Mammary epithelial cell (primary cell): ENCODE measurements at regions of chr18 and their contacts with region 1.

Region 1: GRCh38 chr18:21997207-21998143 is 171.9 kb upstream of the GATA6 start:
- DNase-seq: peak; percentile 32
- H3K4me3 ChIP-seq: no peak overlapping the region
- H3K27ac ChIP-seq: no peak overlapping the region
- H3K4me1 ChIP-seq: no peaks in the 10 kb centered on the region
- H3K27me3 ChIP-seq: no peaks in the 10 kb centered on the region
- CTCF ChIP-seq: peak; percentile 82 to 96

Region 2: GRCh38 chr18:21980744-21981143 is 16.7 kb before region 1 on chr18:
- CTCF ChIA-PET with region 1: interaction called, 10 read pairs
- dilution Hi-C with region 1: no loop called
- in situ Hi-C with region 1: no loop called
- intact Hi-C with region 1: no loop called
- DNase-seq: no peak
- H3K4me3 ChIP-seq: no peak overlapping the region
- H3K27ac ChIP-seq: no peak overlapping the region
- H3K4me1 ChIP-seq: no peaks in the 10 kb centered on the region
- H3K27me3 ChIP-seq: no peaks in the 10 kb centered on the region
- CTCF ChIP-seq: no peak

Region 3: DNA sequence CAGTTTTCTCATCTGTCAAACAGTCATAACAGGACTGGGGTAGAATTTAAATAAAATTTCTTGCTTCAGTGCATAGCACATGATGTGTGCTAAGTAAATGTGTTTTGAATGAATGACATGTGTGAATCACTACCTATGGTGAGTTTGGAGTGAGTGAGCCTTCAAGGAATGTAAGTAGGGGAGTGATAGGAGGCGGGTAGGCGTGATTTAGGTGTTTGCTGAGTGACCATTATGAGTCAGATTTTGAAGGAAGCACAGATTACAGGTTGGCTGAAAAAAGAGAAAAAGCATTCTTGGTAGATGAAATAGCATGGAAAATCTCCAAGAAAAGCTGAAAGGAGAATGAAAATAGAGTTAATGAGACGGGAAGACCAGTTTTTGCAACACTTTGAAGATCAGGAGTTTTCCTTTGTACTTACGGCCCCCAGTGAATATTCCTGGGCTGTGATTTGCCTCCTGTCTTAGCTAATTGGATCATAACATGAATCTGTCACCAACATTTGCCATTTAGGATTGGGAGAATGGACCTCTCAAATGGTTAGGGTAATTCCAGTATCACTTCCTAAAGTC is 35.0 kb after region 1 on chr18:
- CTCF ChIA-PET with region 1: no interaction called
- dilution Hi-C with region 1: no loop called
- in situ Hi-C with region 1: no loop called
- intact Hi-C with region 1: no loop called
- DNase-seq: peak; percentile 97
- H3K4me3 ChIP-seq: no peak overlapping the region
- H3K27ac ChIP-seq: peak overlapping the region; percentile 49
- H3K4me1 ChIP-seq: peaks cover 19% of the 10 kb centered on the region
- H3K27me3 ChIP-seq: no peaks in the 10 kb centered on the region
- CTCF ChIP-seq: no peak

Region 4: DNA sequence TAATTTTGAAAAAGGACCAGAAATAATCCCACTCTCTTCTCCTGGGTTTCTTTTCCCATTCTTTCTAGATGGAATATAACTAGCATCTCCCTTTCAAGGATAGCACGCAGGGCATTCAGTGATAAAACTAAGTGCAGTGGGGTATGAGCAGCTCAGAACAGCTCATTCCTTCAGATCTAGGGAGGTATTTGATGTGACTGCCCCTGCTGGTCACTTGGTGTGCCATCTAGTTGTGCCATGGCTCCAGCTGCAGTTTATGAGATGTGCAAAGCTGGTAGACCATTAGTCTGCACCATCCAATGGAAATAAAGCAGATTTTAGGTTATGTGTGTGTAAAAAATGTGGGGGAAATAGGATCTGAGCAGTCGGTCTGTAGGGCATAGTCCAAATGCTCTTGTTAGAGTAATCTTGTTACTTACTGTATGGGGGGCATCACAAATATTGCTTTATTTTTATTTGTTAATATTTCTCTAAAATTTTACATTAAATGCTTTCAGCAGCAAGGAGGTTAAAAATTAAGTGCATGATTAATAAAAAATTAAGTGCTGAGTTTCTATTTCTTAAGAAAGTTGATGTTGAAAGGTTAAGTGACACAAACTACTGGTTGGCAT is 381.3 kb after region 1 on chr18:
- CTCF ChIA-PET with region 1: no interaction called
- dilution Hi-C with region 1: no loop called
- in situ Hi-C with region 1: no loop called
- intact Hi-C with region 1: loop called (anchors 10 kb)
- DNase-seq: peak; percentile 43
- H3K4me3 ChIP-seq: no peak overlapping the region
- H3K27ac ChIP-seq: no peak overlapping the region
- H3K4me1 ChIP-seq: no peaks in the 10 kb centered on the region
- H3K27me3 ChIP-seq: no peaks in the 10 kb centered on the region
- CTCF ChIP-seq: peak; percentile 70 to 73